GM10248 (cell line): ENCODE measurements at regions of chr22 and their contacts with region 1.

Region 1: GRCh38 chr22:37043828-37044538 is 7.6 kb upstream of the KCTD17 start:
- DNase-seq: peak; percentile 91
- CTCF ChIP-seq: peak; percentile 88

Region 2: DNA sequence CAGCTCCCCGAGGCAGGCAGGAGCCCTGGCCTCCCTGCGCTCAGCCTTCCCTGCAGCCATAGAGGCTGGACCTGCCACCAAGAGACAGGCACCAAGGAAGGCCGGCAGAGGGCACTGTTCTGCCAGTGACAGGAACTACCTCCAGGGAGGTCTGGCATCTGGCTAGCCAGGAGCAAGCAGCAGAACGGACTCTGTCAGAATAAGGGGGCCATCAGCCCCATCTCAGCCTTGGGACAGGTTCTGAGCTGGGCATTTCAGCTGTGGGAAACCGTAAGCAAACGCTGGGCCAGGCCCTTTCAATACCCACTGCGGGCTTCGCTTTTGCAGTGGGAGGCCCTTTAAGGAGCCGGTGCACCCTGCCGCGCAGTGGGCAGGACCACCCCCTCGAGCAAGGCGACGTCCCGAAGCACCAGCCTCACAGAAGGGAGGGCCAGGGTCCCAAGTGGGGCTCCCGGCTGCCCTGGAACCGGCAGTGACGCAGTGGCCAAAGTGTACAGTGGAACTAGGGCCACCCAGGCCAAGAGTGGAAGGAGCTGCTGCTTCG is 286.2 kb before region 1 on chr22:
- CTCF ChIA-PET with region 1: interaction called, 16 read pairs
- POLR2A ChIA-PET with region 1: no interaction called
- DNase-seq: peak; percentile 82
- CTCF ChIP-seq: peak; percentile 83

Region 3: GRCh38 chr22:36775964-36776669 is 267.9 kb before region 1 on chr22 and contains the start of gene IFT27:
- CTCF ChIA-PET with region 1: interaction called, 18 read pairs
- POLR2A ChIA-PET with region 1: no interaction called
- DNase-seq: peak; percentile 100
- CTCF ChIP-seq: no peak

Region 4: GRCh38 chr22:36781656-36782627 is 262.0 kb before region 1 on chr22:
- CTCF ChIA-PET with region 1: interaction called, 18 read pairs
- POLR2A ChIA-PET with region 1: no interaction called
- DNase-seq: peak; percentile 90
- CTCF ChIP-seq: peak; percentile 98

Region 5: GRCh38 chr22:37019309-37020125 is 24.5 kb before region 1 on chr22 and contains the starts of genes MPST and TST:
- CTCF ChIA-PET with region 1: interaction called, 40 read pairs
- POLR2A ChIA-PET with region 1: no interaction called
- DNase-seq: peak; percentile 87
- CTCF ChIP-seq: no peak

Region 6: GRCh38 chr22:37026325-37026724 is 17.7 kb before region 1 on chr22:
- CTCF ChIA-PET with region 1: interaction called, 40 read pairs
- POLR2A ChIA-PET with region 1: no interaction called
- DNase-seq: no peak
- CTCF ChIP-seq: no peak

Region 7: DNA sequence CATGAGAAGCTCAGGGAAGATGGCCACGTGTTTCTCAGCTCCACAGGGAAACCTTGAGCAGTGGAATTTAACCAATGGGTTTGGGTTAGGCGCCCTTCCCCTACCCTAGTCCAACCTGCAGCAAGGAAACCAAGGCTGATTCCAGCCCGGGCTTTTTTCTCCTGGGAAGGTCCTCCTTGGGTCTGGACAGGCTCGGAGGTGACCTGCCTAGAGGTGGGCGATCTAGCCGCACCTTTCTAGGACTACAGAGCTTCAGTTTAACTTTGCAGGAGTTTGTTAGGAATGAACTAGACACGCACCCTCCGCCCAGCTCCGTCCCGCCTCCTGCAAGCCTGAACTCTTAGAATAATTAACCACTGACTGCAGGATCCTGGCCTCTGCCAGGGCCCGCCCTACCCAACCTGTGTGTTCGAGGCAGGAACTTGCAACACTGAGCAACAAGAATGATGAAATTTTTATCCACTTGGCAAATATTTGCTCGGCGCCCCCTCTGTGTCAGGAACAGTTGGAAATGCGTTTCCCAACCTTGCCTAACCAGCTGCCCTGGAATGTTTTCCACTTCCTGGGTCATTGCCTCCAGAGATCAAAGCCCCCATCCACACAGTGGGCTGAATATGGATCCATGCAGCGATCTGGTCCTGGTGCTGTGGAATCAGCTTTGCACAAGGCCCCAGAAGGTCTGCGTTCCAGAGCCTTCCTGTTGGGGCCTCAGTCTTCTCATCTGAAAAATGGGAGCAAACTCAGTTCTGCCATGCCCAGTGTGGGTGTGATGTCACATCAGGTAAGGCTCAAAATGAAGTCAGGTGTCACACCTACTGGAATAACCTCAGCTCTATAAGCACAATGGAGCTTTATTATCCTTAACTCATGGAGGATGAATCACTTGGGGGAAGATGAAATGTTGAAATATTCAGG is 11.2 kb before region 1 on chr22:
- CTCF ChIA-PET with region 1: interaction called, 37 read pairs
- POLR2A ChIA-PET with region 1: interaction called, 3 read pairs
- DNase-seq: no peak
- CTCF ChIP-seq: no peak